Natural killer cell (primary cell): ENCODE measurements at regions of chr7 and their contacts with region 1.

Region 1: GRCh38 chr7:64830926-64831325 is 36.7 kb downstream of the ZNF138 start:
- DNase-seq: no peak
- ATAC-seq: no peak
- H3K4me3 ChIP-seq: no peak overlapping the region
- H3K4me3 Mint-ChIP-seq: no peak overlapping the region
- H3K27ac ChIP-seq: no peak overlapping the region
- H3K27ac Mint-ChIP-seq: no peak overlapping the region
- H3K4me1 ChIP-seq: no peaks in the 10 kb centered on the region
- H3K4me1 Mint-ChIP-seq: no peaks in the 10 kb centered on the region
- H3K27me3 ChIP-seq: no peaks in the 10 kb centered on the region
- H3K27me3 Mint-ChIP-seq: no peaks in the 10 kb centered on the region
- CTCF ChIP-seq: no peak

Region 2: DNA sequence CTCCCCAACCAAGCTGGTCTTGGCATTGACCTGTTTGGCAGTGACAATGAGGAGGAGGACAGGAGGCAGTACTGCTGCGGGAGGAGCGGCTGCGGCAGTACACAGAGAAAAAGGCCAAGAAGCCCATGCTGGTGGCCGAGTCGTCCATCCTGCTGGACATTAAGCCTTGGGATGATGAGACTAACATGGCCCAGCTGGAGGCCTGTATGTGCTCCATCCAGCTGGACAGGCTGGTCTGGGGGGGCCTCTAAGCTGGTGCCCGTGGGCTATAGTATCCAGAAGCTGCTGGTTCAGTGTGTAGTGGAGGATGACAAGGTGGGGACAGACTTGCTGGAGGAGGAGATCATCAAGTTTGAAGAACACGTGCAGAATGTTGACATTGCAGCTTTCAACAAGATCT is 33.0 kb after region 1 on chr7:
- intact Hi-C with region 1: loop called (anchors 2 kb)
- DNase-seq: no peak
- ATAC-seq: no peak
- H3K4me3 ChIP-seq: no peak overlapping the region
- H3K4me3 Mint-ChIP-seq: no peak overlapping the region
- H3K27ac ChIP-seq: no peak overlapping the region
- H3K27ac Mint-ChIP-seq: no peak overlapping the region
- H3K4me1 ChIP-seq: no peaks in the 10 kb centered on the region
- H3K4me1 Mint-ChIP-seq: no peaks in the 10 kb centered on the region
- H3K27me3 ChIP-seq: no peaks in the 10 kb centered on the region
- H3K27me3 Mint-ChIP-seq: no peaks in the 10 kb centered on the region
- CTCF ChIP-seq: no peak